Activated naive CD4-positive, alpha-beta T cell treated with anti-CD3 and anti-CD28 coated beads for 36 hours (primary cell): ENCODE measurements at regions of chr12 and their contacts with region 1.

Region 1: DNA sequence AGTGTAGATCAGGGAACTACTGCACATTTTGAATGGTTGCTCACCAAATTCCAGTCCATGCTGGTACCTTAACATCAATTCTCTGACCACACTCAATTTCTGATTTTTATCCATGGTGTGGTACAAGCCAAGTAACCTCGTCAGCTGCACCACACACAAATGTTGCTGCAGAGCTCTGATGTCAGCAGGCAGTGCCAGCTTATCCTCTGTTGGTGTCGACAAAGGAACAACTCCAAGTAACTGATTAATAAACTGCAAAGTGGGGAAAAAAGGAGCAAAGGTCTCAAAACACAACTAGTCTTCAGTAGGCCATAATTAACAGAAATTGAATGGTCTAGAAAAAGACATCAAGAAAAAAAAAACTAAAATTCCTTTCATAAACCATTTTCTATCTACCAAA is 47.4 kb downstream of the NAA25 start:
- DNase-seq: no peak
- H3K4me3 Mint-ChIP-seq: no peak overlapping the region
- H3K27ac Mint-ChIP-seq: no peak overlapping the region
- H3K4me1 Mint-ChIP-seq: no peaks in the 10 kb centered on the region
- H3K27me3 Mint-ChIP-seq: no peaks in the 10 kb centered on the region

Region 2: GRCh38 chr12:111673503-111673902 is 387.6 kb before region 1 on chr12:
- CTCF ChIA-PET with region 1: no interaction called
- intact Hi-C with region 1: no loop called
- DNase-seq: no peak
- H3K4me3 Mint-ChIP-seq: no peak overlapping the region
- H3K27ac Mint-ChIP-seq: no peak overlapping the region
- H3K4me1 Mint-ChIP-seq: no peaks in the 10 kb centered on the region
- H3K27me3 Mint-ChIP-seq: no peaks in the 10 kb centered on the region

Region 3: GRCh38 chr12:111927346-111927745 is 133.8 kb before region 1 on chr12:
- CTCF ChIA-PET with region 1: no interaction called
- intact Hi-C with region 1: no loop called
- DNase-seq: no peak
- H3K4me3 Mint-ChIP-seq: no peak overlapping the region
- H3K27ac Mint-ChIP-seq: no peak overlapping the region
- H3K4me1 Mint-ChIP-seq: no peaks in the 10 kb centered on the region
- H3K27me3 Mint-ChIP-seq: no peaks in the 10 kb centered on the region

Region 4: GRCh38 chr12:112012775-112013600 is 48.1 kb before region 1 on chr12 and contains the starts of genes ERP29 and TMEM116:
- CTCF ChIA-PET with region 1: no interaction called
- intact Hi-C with region 1: no loop called
- DNase-seq: peak; percentile 100
- H3K4me3 Mint-ChIP-seq: peak within 1 kb of the TSS; percentile 98
- H3K27ac Mint-ChIP-seq: peak within 1 kb of the TSS; percentile 96
- H3K4me1 Mint-ChIP-seq: peaks cover 48% of the 10 kb centered on the region
- H3K27me3 Mint-ChIP-seq: no peaks in the 10 kb centered on the region
- total RNA-seq, gene ERP29: 101 to 107 TPM
- total RNA-seq, gene TMEM116: 12.7 to 13.4 TPM

Region 5: GRCh38 chr12:112025808-112026375 is 35.2 kb before region 1 on chr12:
- CTCF ChIA-PET with region 1: no interaction called
- intact Hi-C with region 1: loop called (anchors 5 kb)
- DNase-seq: no peak
- H3K4me3 Mint-ChIP-seq: no peak overlapping the region
- H3K27ac Mint-ChIP-seq: peak overlapping the region; percentile 79
- H3K4me1 Mint-ChIP-seq: peaks cover 34% of the 10 kb centered on the region
- H3K27me3 Mint-ChIP-seq: no peaks in the 10 kb centered on the region